ENCODE measurements at regions of chr22 and their contacts with region 1.

Region 1: DNA sequence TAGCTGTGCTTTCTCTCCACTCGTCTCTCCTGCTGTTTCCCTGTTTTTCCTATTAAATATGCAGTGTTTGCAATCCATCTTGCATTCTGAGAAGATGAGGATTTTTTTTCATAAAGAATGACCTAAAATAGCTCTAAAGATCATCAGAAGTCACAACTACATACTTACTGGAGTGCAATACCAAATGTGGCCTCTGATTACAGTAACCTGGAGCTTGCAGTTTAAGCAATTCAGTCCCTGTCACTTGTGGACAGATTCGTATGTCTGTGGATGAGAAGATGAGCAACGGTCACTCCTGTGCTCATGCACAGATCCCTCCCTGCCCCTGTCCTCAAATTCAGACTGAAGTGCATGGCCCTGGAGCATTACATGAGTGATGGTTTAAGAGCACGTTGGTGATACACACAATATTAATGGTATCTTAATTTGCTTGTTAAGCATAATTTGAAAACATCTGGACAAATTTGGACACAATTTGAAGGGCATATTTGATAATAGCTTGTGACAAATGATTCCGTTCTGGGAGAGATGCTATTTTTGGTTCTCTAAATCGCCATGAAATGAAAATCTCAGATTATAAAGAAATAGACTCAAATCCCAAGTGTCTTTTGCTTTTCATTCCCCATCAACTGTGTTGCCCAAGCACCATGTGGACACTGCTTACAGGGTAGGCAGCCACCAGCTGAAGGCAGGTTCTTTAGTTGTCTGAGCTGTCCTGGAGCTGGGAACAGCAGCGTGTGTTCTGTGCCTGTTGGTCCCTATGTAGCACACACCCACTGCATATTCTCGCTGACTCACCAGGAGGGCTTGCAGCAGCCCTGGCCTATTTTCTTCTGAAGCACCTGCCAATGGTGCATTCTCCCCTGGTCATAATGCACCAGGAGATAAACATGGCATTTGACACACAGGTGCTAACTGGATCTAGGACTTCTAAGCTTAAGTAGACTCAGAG is 32.6 kb upstream of the PRAME start:
- DNase-seq: no peak
- H3K4me3 ChIP-seq: no peak overlapping the region
- H3K27ac ChIP-seq: no peak overlapping the region
- H3K4me1 ChIP-seq: no peaks in the 10 kb centered on the region
- H3K27me3 ChIP-seq: no peaks in the 10 kb centered on the region
- CTCF ChIP-seq: peak in 1 of 2 donors; percentile 6
- POLR2A ChIP-seq: no peak

Region 2: DNA sequence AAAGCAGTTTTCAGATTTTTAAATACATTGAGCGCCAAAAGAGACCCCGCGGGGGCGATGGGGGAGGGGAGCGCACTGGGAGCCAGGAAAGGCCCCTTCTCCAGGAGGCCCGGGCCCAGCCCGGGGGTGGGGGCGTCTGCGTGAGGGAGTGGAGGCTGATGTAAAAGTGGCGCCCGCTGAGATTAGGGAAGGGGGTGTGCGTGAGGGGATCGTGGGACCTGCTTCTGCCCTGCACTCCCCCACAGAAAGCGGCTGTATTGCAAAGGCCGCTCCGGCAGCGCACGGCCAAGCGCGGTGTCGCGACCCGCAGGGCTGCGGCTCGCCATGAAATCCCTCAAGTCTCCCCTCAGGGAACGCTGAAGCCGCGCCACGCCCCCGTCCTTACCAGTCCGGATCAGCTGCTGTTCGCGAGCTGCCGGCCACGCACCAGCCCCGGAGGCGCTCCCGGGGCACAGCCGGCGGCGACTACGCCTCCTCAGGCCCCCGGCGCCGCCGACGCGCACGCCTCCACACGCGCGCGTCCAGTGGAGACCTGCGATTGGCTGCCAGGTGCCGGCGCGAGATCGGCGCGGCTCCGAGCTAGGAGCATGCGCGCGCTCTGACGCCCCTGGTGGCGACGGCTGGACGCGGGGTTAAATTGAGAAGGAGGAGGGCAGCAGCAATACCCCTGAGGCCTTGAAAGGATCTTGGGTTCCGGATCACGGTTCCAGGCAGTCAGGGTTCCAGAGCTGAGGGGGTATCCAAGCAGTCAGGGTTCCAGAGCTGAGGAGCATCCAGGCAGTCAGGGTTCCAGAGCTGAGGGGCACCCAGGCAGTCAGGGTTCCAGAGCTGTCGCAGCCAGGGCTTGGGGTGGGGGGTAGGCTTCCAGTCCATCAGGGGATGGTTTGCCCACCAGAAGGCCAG is 83.1 kb before region 1 on chr22 and contains the start of gene ZNF280B:
- CTCF ChIA-PET with region 1: interaction called, 16 read pairs
- POLR2A ChIA-PET with region 1: no interaction called
- dilution Hi-C with region 1: no loop called
- intact Hi-C with region 1: no loop called
- DNase-seq: peak; percentile 89
- H3K4me3 ChIP-seq: peak within 1 kb of the TSS; percentile 62 to 80 (median 62)
- H3K27ac ChIP-seq: peak within 1 kb of the TSS; percentile 16
- H3K4me1 ChIP-seq: peaks cover 4% of the 10 kb centered on the region
- H3K27me3 ChIP-seq: peaks cover 3 to 4% of the 10 kb centered on the region in 2 experiments
- CTCF ChIP-seq: peak; percentile 82 to 92
- POLR2A ChIP-seq: peak; percentile 39
- total RNA-seq, gene ZNF280B: 3.1 TPM in 2 replicates

Region 3: DNA sequence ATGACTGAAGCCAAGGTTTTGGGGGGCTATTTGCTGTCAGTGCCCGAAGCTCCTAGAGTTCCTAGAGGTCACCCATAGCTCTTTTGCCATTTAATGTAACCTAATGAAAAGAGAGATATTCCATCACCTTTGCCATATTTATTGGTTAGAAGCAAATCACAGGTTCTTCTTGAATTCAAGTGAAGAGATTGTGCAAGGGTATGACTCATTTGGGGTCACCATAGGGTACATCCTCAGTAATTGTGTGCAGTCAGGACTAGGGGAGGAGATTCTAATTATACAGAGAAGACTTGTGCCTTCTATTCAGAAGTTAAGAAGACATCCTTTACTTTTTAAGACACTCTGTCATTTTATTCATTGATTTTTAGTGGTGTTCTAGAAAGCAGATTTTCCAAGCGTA is 25.6 kb before region 1 on chr22:
- CTCF ChIA-PET with region 1: interaction called, 13 read pairs
- POLR2A ChIA-PET with region 1: no interaction called
- dilution Hi-C with region 1: no loop called
- intact Hi-C with region 1: no loop called
- DNase-seq: no peak
- H3K4me3 ChIP-seq: no peak overlapping the region
- H3K27ac ChIP-seq: no peak overlapping the region
- H3K4me1 ChIP-seq: no peaks in the 10 kb centered on the region
- H3K27me3 ChIP-seq: peaks cover 6 to 9% of the 10 kb centered on the region in 2 experiments
- CTCF ChIP-seq: no peak
- POLR2A ChIP-seq: no peak

Region 4: DNA sequence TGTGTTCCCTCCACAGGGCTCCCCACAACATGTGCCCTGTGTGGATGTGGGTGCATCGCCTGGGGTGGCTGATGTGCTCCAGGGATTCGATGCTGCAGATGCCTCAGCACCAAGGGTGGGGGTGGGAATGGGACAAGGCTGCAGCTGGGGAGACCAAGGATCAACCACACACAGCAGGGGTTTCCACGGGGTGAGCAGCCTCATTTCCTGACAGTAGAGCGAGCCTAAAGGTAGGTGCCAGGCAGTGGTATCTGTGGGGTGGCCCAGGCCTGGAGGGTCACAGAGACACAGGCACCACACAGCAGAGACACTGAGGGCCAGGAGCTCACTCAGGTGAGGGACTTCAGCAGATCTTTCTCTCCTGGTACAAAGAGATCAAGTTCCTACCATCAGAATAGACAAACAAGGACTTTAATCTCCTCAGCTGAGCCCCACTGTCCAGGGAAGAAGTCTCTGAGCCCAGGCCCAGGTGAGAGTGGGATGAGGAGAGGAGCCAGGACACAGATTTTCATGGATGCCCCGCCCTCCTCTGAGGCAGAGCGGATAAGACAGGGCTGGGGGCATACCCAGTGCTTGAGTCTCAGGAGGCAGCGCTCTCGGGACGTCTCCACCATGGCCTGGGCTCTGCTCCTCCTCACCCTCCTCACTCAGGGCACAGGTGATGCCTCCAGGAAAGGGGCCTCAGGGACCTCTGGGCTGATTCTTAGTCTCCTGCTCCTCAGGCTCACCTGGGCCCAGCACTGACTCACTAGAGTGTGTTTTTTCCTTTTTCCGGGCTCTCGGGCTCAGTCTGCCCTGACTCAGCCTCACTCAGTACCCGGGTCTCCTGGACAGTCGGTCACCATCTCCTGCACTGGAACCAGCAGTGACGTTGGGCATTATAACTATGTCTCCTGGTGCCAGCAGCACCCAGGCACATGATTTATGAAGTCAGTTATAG is 72.5 kb after region 1 on chr22:
- CTCF ChIA-PET with region 1: no interaction called
- POLR2A ChIA-PET with region 1: no interaction called
- dilution Hi-C with region 1: no loop called
- intact Hi-C with region 1: no loop called
- DNase-seq: no peak
- H3K4me3 ChIP-seq: no peak overlapping the region
- H3K27ac ChIP-seq: no peak overlapping the region
- H3K4me1 ChIP-seq: no peaks in the 10 kb centered on the region
- H3K27me3 ChIP-seq: peaks cover 0 to 1% of the 10 kb centered on the region in 2 experiments
- CTCF ChIP-seq: no peak
- POLR2A ChIP-seq: no peak

Region 5: DNA sequence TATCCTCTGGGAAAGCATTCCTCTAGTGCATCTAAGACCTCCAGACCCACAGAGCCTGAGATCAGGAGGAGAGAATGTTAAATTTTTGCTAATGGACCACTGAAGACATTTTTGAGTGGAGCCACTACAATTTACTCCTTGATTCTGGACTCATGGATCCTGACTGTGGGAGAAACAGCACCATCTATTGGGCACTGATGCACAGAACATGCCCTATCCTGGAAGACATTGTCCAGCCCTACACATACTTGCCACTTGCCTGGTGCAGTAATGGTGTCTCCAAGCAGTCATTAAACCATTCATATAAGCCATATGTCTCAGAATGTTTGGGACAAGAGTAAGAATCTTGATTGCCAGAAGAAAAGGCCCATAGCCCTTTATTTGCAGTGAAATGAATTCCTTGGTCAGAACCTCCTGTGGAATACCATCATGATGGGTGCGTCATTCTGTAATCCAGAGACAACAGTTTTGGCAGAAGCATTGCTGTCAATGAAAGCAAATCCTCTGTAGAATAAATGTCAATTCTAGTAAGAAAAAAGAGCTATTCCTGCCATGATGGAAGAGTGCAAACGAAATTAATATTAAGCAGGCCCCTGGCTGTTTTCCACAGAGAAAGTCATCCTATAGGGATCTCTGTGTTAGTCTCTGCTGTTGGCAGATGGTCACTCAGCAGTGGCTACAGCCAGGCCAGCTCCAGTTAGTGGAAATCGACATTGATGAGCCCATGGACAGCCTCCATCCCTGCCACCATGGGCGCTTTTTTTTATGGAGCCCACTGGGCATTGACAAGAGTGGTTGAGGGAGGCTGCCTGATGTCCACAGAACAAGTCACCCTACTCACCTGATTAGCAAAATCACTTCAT is 96.2 kb after region 1 on chr22:
- CTCF ChIA-PET with region 1: interaction called, 9 read pairs
- POLR2A ChIA-PET with region 1: no interaction called
- dilution Hi-C with region 1: no loop called
- intact Hi-C with region 1: loop called (anchors 10 kb)
- DNase-seq: peak; percentile 67
- H3K4me3 ChIP-seq: no peak overlapping the region
- H3K27ac ChIP-seq: no peak overlapping the region
- H3K4me1 ChIP-seq: peaks cover 2% of the 10 kb centered on the region
- H3K27me3 ChIP-seq: peaks cover 2 to 10% of the 10 kb centered on the region in 2 experiments
- CTCF ChIP-seq: peak; percentile 70 to 73
- POLR2A ChIP-seq: no peak

Region 6: GRCh38 chr22:22737590-22737989 is 146.0 kb after region 1 on chr22:
- CTCF ChIA-PET with region 1: no interaction called
- POLR2A ChIA-PET with region 1: no interaction called
- dilution Hi-C with region 1: no loop called
- intact Hi-C with region 1: no loop called
- DNase-seq: no peak
- H3K4me3 ChIP-seq: no peak overlapping the region
- H3K27ac ChIP-seq: no peak overlapping the region
- H3K4me1 ChIP-seq: no peaks in the 10 kb centered on the region
- H3K27me3 ChIP-seq: peaks cover 6 to 9% of the 10 kb centered on the region in 2 experiments
- CTCF ChIP-seq: no peak
- POLR2A ChIP-seq: no peak

Region 7: GRCh38 chr22:22877523-22878210 is 286.0 kb after region 1 on chr22:
- CTCF ChIA-PET with region 1: interaction called, 13 read pairs
- POLR2A ChIA-PET with region 1: no interaction called
- dilution Hi-C with region 1: no loop called
- intact Hi-C with region 1: no loop called
- DNase-seq: peak; percentile 40
- H3K4me3 ChIP-seq: no peak overlapping the region
- H3K27ac ChIP-seq: no peak overlapping the region
- H3K4me1 ChIP-seq: no peaks in the 10 kb centered on the region
- H3K27me3 ChIP-seq: no peaks in the 10 kb centered on the region
- CTCF ChIP-seq: peak; percentile 65 to 85
- POLR2A ChIP-seq: no peak

Region 8: GRCh38 chr22:22981670-22982571 is 390.3 kb after region 1 on chr22:
- CTCF ChIA-PET with region 1: no interaction called
- POLR2A ChIA-PET with region 1: no interaction called
- dilution Hi-C with region 1: no loop called
- intact Hi-C with region 1: no loop called
- DNase-seq: no peak
- H3K4me3 ChIP-seq: no peak overlapping the region
- H3K27ac ChIP-seq: no peak overlapping the region
- H3K4me1 ChIP-seq: no peaks in the 10 kb centered on the region
- H3K27me3 ChIP-seq: peaks cover 7 to 8% of the 10 kb centered on the region in 2 experiments
- CTCF ChIP-seq: no peak
- POLR2A ChIP-seq: no peak